Activated CD4-positive, alpha-beta T cell treated with anti-CD3 and anti-CD28 coated beads for 36 hours (primary cell): ENCODE measurements at regions of chr1 and their contacts with region 1.

Region 1: GRCh38 chr1:55140546-55140983 is 74.6 kb downstream of the USP24 start:
- DNase-seq: peak; percentile 84
- ATAC-seq: peak; percentile 96
- H3K4me3 Mint-ChIP-seq: no peak overlapping the region
- H3K27ac Mint-ChIP-seq: peak overlapping the region; percentile 67
- H3K4me1 Mint-ChIP-seq: peaks cover 15% of the 10 kb centered on the region
- H3K27me3 Mint-ChIP-seq: no peaks in the 10 kb centered on the region

Region 2: GRCh38 chr1:55154616-55155015 is 14.1 kb after region 1 on chr1:
- CTCF ChIA-PET with region 1: interaction called, 22 read pairs
- POLR2A ChIA-PET with region 1: no interaction called
- intact Hi-C with region 1: no loop called
- DNase-seq: no peak
- ATAC-seq: no peak
- H3K4me3 Mint-ChIP-seq: no peak overlapping the region
- H3K27ac Mint-ChIP-seq: no peak overlapping the region
- H3K4me1 Mint-ChIP-seq: peaks cover 33% of the 10 kb centered on the region
- H3K27me3 Mint-ChIP-seq: no peaks in the 10 kb centered on the region

Region 3: DNA sequence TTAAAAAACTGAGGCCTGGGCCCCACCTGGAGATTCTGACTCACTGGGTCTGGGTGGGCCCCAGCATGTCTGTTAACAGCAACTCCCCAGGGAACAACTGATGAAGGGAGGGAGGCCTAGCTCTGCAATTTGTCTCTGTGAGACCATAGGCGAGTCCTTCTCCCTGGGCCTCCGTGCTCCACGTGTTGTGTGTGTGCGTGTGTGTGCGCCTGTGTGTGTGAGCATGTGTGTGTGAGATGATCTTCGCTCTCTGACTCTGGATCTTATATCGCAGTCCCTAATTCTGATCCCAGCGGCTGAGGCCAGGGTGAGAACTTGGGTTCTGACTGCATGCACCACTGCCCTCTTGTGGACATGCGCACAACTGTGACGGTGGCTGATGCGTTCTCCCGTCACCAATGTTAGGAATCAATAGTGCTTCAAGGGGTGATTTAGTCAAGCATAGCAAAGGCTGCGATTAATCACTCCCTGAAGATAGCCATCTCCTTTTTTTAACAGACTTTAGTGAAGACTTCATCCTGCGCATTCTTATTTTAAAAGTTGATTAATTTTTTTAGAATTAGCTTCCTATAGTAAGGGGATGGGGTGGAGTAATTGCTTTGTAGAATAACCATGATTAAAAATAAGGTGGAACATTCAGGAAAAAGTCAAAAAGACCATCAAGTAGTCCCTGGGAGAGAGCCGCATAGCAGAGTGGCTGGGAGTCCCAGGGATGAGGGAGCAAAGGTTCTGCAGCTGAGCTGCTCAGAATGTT is 137.0 kb after region 1 on chr1:
- CTCF ChIA-PET with region 1: interaction called, 133 read pairs
- POLR2A ChIA-PET with region 1: interaction called, 3 read pairs
- intact Hi-C with region 1: loop called (anchors 1 kb)
- DNase-seq: peak; percentile 92
- ATAC-seq: peak; percentile 91
- H3K4me3 Mint-ChIP-seq: peak overlapping the region; percentile 0
- H3K27ac Mint-ChIP-seq: peak overlapping the region; percentile 58
- H3K4me1 Mint-ChIP-seq: peaks cover 23% of the 10 kb centered on the region
- H3K27me3 Mint-ChIP-seq: peaks cover 4% of the 10 kb centered on the region

Region 4: GRCh38 chr1:55443175-55443915 is 302.8 kb after region 1 on chr1:
- CTCF ChIA-PET with region 1: no interaction called
- POLR2A ChIA-PET with region 1: no interaction called
- intact Hi-C with region 1: loop called in 1 of 2 experiments (anchors 10 kb)
- DNase-seq: no peak
- ATAC-seq: no peak
- H3K4me3 Mint-ChIP-seq: no peak overlapping the region
- H3K27ac Mint-ChIP-seq: no peak overlapping the region
- H3K4me1 Mint-ChIP-seq: peaks cover 8% of the 10 kb centered on the region
- H3K27me3 Mint-ChIP-seq: peaks cover 6% of the 10 kb centered on the region